ENCODE measurements at regions of chr20 and their contacts with region 1.

Region 1: GRCh38 chr20:478949-479429 is 16.7 kb upstream of the TBC1D20 start:
- DNase-seq: peak in 6 of 14 experiments; percentile 4 to 81 (median 62)
- ATAC-seq: peak; percentile 88
- H3K4me3 ChIP-seq: no peak overlapping the region
- H3K4me3 Mint-ChIP-seq: no peak overlapping the region
- H3K27ac ChIP-seq: no peak overlapping the region
- H3K27ac Mint-ChIP-seq: no peak overlapping the region
- H3K4me1 ChIP-seq: peaks cover 11% of the 10 kb centered on the region
- H3K4me1 Mint-ChIP-seq: peaks cover 28% of the 10 kb centered on the region
- H3K27me3 ChIP-seq: no peaks in the 10 kb centered on the region
- H3K27me3 Mint-ChIP-seq: no peaks in the 10 kb centered on the region
- CTCF ChIP-seq: peak; percentile 77

Region 2: DNA sequence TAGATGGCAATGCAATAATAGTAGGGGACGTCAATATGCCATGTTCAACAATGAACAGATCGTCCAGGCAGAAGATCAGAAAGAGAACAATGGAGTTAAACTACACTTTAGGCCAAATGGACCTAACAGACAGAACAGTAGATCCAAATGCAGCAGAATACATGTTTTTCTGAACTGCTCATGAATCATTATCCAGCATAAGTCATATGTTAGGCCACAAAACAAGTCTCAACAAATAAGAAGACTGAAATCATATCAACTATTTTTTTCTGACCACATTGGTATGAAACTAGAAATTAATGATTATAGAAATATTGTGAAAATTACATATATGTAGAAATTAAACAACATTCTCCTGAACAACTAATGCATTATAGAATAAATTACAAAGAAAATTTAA is 401.8 kb before region 1 on chr20:
- CTCF ChIA-PET with region 1: no interaction called
- POLR2A ChIA-PET with region 1: no interaction called
- intact Hi-C with region 1: no loop called
- DNase-seq: no peak
- ATAC-seq: no peak
- H3K4me3 ChIP-seq: no peak overlapping the region
- H3K4me3 Mint-ChIP-seq: no peak overlapping the region
- H3K27ac ChIP-seq: no peak overlapping the region
- H3K27ac Mint-ChIP-seq: no peak overlapping the region
- H3K4me1 ChIP-seq: no peaks in the 10 kb centered on the region
- H3K4me1 Mint-ChIP-seq: no peaks in the 10 kb centered on the region
- H3K27me3 ChIP-seq: peaks cover 6 to 18% of the 10 kb centered on the region in 2 experiments
- H3K27me3 Mint-ChIP-seq: peaks cover 47% of the 10 kb centered on the region
- CTCF ChIP-seq: no peak

Region 3: GRCh38 chr20:354298-355064 is 124.5 kb before region 1 on chr20:
- CTCF ChIA-PET with region 1: interaction called, 14 read pairs
- POLR2A ChIA-PET with region 1: no interaction called
- intact Hi-C with region 1: loop called (anchors 1 kb)
- DNase-seq: peak; percentile 64 to 91 (median 74)
- ATAC-seq: peak; percentile 100
- H3K4me3 ChIP-seq: no peak overlapping the region
- H3K4me3 Mint-ChIP-seq: no peak overlapping the region
- H3K27ac ChIP-seq: no peak overlapping the region
- H3K27ac Mint-ChIP-seq: no peak overlapping the region
- H3K4me1 ChIP-seq: peaks cover 8% of the 10 kb centered on the region
- H3K4me1 Mint-ChIP-seq: no peaks in the 10 kb centered on the region
- H3K27me3 ChIP-seq: no peaks in the 10 kb centered on the region
- H3K27me3 Mint-ChIP-seq: no peaks in the 10 kb centered on the region
- CTCF ChIP-seq: peak; percentile 96

Region 4: DNA sequence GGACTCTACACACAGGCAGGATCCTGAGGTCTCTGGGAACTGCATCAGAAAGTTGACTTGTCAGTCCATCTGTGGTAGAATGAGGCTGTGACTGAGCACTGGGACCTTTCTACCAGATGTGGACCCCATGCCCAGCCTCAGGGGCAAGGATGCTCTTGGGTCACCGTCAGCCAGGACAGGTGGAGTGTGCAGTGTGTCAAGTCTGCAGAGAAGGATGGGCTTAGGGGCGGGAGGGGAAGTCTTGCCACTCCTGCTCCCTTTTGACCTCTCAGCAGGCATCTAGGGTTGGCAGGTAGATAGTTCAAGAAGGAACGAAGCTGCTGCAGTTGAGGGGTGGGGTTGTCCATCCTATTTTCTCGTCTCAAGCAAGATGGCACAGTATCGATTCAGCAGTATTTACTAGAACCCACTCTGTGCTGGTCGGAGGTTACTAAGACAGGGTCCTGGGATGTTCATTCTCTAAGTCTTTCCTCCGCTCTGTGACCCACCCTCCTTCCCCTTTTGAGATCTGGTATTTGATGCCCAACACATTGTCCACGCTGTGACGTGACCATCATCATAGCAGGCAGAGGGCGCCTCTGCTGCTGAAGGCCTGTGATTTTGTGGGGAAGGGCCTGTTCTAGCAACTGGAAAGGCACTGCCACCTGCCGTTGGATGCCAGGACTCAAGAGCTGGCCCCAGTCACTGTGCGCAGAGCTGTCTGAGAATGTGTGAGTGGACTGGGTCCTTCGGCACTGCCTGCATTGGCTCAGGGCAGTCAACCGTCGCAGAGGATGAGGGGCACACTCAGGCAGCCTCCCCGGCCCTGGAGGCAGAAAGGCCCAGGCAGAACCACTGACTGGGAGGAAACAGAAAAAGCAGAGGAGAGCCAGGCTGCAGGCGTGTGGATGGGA is 47.7 kb before region 1 on chr20:
- CTCF ChIA-PET with region 1: interaction called, 5 read pairs
- POLR2A ChIA-PET with region 1: no interaction called
- intact Hi-C with region 1: loop called (anchors 1 to 5 kb)
- DNase-seq: peak in 9 of 14 experiments; percentile 10 to 71 (median 27)
- ATAC-seq: peak; percentile 37
- H3K4me3 ChIP-seq: no peak overlapping the region
- H3K4me3 Mint-ChIP-seq: no peak overlapping the region
- H3K27ac ChIP-seq: peak overlapping the region in 1 of 2 donors; percentile 32
- H3K27ac Mint-ChIP-seq: no peak overlapping the region
- H3K4me1 ChIP-seq: peaks cover 25% of the 10 kb centered on the region
- H3K4me1 Mint-ChIP-seq: peaks cover 31% of the 10 kb centered on the region
- H3K27me3 ChIP-seq: no peaks in the 10 kb centered on the region
- H3K27me3 Mint-ChIP-seq: no peaks in the 10 kb centered on the region
- CTCF ChIP-seq: peak; percentile 33

Region 5: DNA sequence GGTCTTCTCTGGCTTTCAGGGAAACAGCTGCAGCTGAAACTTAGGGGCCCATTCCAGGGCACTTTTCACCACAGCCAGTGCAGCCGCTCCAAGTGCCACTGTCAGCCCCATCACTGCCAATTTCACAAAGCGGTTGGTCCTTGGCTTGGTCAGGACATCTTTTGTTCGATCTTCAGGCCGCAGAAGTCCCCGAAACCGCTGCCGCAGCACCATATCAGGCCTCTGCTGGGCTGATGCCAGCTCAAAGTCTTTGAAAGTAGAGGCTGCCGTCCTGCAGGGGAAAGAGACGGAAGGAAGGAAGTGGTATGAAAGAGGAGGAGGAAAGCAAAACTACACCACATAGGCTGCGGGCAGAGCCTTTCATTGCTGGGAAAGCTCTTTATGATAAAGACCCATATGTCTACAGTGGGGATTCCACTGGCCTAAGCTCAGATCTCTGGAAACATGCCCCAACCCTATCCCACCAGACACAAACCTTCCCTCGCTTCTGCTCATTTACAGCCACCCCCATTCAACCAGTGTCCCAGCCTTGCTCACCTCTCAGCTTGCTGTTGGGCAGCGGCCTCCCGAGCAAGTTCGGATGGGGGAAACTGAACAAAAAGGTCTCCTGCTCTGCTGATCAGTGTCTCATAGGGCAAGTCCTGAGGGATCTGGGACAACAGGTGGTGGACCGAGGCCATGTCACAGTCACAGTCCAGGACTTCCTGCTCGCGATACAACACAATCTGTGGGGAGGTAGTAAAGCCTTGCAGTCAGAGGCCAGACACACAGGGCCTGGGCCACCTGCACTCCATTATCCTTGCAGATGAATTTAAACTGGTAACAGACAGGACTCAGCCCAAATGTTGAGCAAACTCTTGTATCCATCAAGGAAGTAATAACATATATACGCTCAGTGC is 40.2 kb before region 1 on chr20:
- CTCF ChIA-PET with region 1: no interaction called
- POLR2A ChIA-PET with region 1: interaction called, 3 read pairs
- intact Hi-C with region 1: loop called in 1 of 2 experiments (anchors 5 kb)
- DNase-seq: peak; percentile 28 to 86 (median 54)
- ATAC-seq: peak; percentile 85
- H3K4me3 ChIP-seq: peak overlapping the region; percentile 37
- H3K4me3 Mint-ChIP-seq: peak overlapping the region; percentile 71
- H3K27ac ChIP-seq: no peak overlapping the region
- H3K27ac Mint-ChIP-seq: peak overlapping the region; percentile 49
- H3K4me1 ChIP-seq: peaks cover 51% of the 10 kb centered on the region
- H3K4me1 Mint-ChIP-seq: peaks cover 56% of the 10 kb centered on the region
- H3K27me3 ChIP-seq: no peaks in the 10 kb centered on the region
- H3K27me3 Mint-ChIP-seq: no peaks in the 10 kb centered on the region
- CTCF ChIP-seq: no peak

Region 6: GRCh38 chr20:462199-462991 is 16.6 kb before region 1 on chr20 and contains the start of gene TBC1D20:
- CTCF ChIA-PET with region 1: interaction called, 3 read pairs
- POLR2A ChIA-PET with region 1: no interaction called
- intact Hi-C with region 1: loop called (anchors 2 kb)
- DNase-seq: peak; percentile 72 to 95 (median 85)
- ATAC-seq: peak; percentile 97
- H3K4me3 ChIP-seq: peak within 1 kb of the TSS; percentile 90
- H3K4me3 Mint-ChIP-seq: peak within 1 kb of the TSS; percentile 98
- H3K27ac ChIP-seq: peak within 1 kb of the TSS; percentile 59 to 67
- H3K27ac Mint-ChIP-seq: peak within 1 kb of the TSS; percentile 90
- H3K4me1 ChIP-seq: peaks cover 34% of the 10 kb centered on the region
- H3K4me1 Mint-ChIP-seq: peaks cover 53% of the 10 kb centered on the region
- H3K27me3 ChIP-seq: no peaks in the 10 kb centered on the region
- H3K27me3 Mint-ChIP-seq: no peaks in the 10 kb centered on the region
- CTCF ChIP-seq: peak; percentile 20
- total RNA-seq, gene TBC1D20: 15.7 to 16.1 TPM

Measured in CD4-positive, alpha-beta T cell (primary cell).